Activated CD4-positive, alpha-beta T cell treated with anti-CD3 and anti-CD28 coated beads for 36 hours (primary cell): ENCODE measurements at regions of chr14 and their contacts with region 1.

Region 1: GRCh38 chr14:35355981-35356841 is 48.3 kb downstream of the NFKBIA start:
- DNase-seq: peak; percentile 79
- ATAC-seq: peak; percentile 85
- H3K4me3 Mint-ChIP-seq: peak overlapping the region; percentile 30
- H3K27ac Mint-ChIP-seq: peak overlapping the region; percentile 91
- H3K4me1 Mint-ChIP-seq: peaks cover 46% of the 10 kb centered on the region
- H3K27me3 Mint-ChIP-seq: no peaks in the 10 kb centered on the region

Region 2: DNA sequence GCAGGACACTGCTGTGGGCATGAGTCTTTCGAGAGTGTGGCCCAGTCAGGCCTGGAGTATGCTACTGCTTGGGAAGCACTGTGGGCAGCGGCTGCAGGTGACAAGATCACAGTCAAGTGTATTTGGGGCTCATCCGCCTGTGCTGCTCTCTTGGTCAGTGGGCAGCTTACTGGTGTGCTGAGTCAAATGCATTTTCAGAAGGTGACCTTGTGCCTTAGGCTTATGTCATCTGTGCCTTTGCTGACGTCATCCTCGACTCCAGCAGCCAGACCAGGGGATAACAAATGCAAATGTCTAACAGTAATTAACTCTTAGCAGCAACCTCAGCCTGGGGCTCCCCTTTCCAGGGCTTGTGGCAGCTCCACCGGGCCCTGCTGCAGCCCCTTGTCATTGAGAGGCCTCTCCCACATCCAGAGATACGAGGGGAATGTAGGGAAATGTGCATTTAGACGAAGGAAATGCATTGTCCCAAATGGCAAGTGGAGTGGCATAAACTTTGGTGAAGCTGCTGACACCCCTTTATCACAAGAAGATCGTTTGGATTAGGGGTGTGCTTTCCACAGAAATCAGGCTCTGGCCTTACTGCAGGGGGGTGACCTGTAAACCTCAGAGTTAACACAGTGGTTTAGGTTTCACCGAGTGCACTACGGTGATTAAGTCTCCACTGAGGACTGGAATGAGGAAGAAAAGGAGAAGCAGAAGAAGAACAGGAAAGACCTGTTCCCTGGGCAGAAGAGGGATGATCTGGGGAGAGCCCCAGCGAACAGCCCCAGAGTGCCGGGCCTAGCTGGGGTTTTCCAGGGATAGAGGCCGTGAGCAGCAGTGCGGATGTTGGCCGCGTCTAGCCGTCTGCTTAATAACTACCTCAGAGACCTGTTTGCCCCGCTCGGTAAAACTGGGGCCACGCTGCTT is 24.4 kb before region 1 on chr14:
- CTCF ChIA-PET with region 1: interaction called, 6 read pairs
- POLR2A ChIA-PET with region 1: interaction called, 7 read pairs
- intact Hi-C with region 1: loop called (anchors 1 kb)
- DNase-seq: no peak
- ATAC-seq: no peak
- H3K4me3 Mint-ChIP-seq: no peak overlapping the region
- H3K27ac Mint-ChIP-seq: peak overlapping the region; percentile 96
- H3K4me1 Mint-ChIP-seq: peaks cover 32% of the 10 kb centered on the region
- H3K27me3 Mint-ChIP-seq: no peaks in the 10 kb centered on the region